ENCODE measurements at regions of chr12 and their contacts with region 1.

Region 1: DNA sequence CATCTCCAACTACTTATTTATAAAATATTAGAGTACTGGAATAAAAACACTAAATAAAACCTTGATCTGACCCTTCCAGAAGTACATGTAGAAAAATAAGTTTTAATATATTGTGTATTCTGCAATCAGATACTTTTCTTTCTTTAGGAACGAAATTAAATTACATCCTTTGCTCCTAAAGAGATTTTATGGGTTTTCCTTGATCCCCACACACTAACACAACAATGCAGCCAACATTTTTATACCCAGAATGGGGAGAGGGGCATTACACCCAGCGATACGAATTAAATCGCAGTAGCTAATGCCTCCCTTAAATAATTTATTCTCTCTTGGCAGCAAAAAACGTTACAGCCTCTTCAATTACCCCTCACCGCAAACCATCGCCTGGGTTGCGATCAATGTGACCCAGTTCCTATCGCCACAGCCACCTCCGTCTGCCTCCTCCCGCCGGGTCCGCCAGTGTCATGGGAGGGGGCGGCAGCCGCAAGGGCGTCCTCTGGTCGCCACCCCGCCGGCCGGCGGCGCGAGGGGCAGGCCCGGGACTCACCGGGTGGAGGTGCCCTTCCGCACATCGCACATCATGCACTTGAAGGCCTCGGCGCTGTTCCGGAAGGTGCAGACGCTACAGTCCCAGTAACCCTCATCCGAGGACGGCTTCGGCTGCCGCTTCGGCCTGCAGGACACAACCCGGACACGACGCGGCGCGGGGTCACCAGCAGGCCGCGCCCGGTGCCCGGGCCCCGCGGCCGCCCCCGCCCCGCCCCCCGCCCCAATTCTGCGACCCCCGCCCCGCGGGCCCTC is 796 bp downstream of the YAF2 start:
- DNase-seq: peak; percentile 75
- ATAC-seq: peak; percentile 76
- H3K4me3 ChIP-seq: peak overlapping the region; percentile 97
- H3K27ac ChIP-seq: peak overlapping the region; percentile 85
- H3K4me1 ChIP-seq: no peaks in the 10 kb centered on the region
- H3K27me3 ChIP-seq: no peaks in the 10 kb centered on the region
- CTCF ChIP-seq: peak; percentile 45; the same call in 1 of the 2 replicates
- POLR2A ChIP-seq: no peak; the same call in 1 of the 2 replicates
- RAD21 ChIP-seq: peak; percentile 25

Region 2: GRCh38 chr12:42144408-42145196 is 92.7 kb before region 1 on chr12 and contains the start of gene GXYLT1:
- CTCF ChIA-PET with region 1: no interaction called
- POLR2A ChIA-PET with region 1: no interaction called
- dilution Hi-C with region 1: no loop called
- in situ Hi-C with region 1: no loop called
- intact Hi-C with region 1: loop called (anchors 5 kb)
- DNase-seq: peak; percentile 91
- ATAC-seq: peak; percentile 97
- H3K4me3 ChIP-seq: peak within 1 kb of the TSS; percentile 94
- H3K27ac ChIP-seq: peak within 1 kb of the TSS; percentile 78
- H3K4me1 ChIP-seq: peaks cover 4% of the 10 kb centered on the region; the same call in 1 of the 2 replicates
- H3K27me3 ChIP-seq: no peaks in the 10 kb centered on the region
- CTCF ChIP-seq: no peak
- POLR2A ChIP-seq: 0 out of 2 replicates have a peak, but pooled peaks have one; percentile 39
- RAD21 ChIP-seq: no peak
- total RNA-seq, gene GXYLT1: 8.6 and 18.1 TPM in 2 replicates

Region 3: DNA sequence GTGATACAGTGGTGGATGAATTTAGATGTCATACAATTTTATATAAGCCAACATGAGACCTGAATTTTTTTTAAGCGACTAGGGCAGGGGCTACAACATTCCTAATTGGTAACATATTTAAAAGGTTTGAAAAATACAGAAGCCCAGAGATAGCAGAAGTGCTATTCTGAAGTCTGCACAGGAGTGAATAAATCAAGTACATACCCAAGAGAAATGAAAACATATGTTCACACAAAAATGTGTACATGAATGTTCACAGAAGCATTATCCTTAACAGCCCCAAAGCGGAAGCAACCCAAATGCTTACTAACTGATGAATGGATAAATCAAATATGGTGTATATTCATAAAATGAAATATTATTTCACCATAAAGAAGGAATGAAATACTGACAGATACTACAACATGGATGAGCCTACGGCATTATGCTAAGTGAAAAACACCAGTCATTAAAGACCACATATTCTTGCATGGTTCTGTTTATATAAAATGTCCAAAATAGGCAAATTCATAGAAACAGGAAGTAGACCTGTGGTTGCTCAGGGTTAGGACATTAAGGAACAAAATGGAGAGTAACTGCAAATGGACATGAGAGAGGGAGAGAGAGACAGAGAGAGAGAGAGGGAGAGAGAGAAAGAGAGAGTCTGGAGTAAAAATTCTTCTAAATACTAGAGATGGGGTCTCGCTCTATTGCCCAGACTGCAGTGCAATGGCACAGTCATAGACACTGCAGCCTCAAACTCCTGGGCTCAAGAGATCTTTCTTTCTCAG is 64.6 kb before region 1 on chr12:
- CTCF ChIA-PET with region 1: no interaction called
- POLR2A ChIA-PET with region 1: no interaction called
- dilution Hi-C with region 1: no loop called
- in situ Hi-C with region 1: no loop called
- intact Hi-C with region 1: no loop called
- DNase-seq: no peak
- ATAC-seq: no peak
- H3K4me3 ChIP-seq: no peak overlapping the region
- H3K27ac ChIP-seq: no peak overlapping the region
- H3K4me1 ChIP-seq: no peaks in the 10 kb centered on the region
- H3K27me3 ChIP-seq: no peaks in the 10 kb centered on the region
- CTCF ChIP-seq: no peak
- POLR2A ChIP-seq: no peak
- RAD21 ChIP-seq: no peak

Region 4: DNA sequence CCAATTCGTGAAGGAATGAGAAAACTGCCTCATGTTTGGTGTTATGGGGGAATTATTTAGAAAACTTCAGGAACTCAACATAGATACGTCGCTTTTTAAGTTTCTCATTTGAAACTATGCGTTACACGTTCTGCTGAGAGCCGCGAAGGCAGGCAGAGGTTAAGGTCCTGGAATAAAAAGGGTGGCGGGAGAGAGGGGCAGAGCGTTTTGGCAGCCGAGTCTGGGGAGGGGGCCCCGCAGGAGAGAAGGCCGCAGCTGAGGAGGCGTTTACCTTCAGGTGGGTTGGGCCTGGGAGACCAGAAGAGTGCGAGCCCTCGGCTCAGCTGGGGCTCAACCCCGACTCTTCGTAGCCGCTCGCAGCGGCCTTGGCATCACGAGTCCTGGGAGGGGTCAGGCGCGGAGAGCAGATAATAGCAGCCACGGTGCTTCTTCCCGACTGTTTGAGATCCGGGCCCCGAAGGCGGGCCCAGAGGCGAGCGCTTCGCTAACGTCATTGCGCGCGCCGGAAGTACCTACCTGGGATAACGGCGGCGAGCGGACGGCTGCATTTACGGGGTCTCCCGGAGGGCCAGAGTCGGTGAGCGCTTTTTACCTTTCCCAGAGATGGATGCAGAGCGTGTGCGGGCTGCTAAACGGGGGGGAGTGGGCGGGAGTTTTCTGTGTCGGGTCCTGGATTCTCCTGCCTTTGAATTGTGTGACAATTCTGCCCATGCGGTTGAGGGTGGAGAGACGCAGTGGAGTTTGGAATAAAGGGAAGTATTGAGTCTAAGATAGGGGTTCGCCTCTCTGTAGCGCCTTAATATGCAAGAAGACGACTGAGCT is 88.6 kb after region 1 on chr12 and contains the starts of genes PPHLN1 and ZCRB1:
- CTCF ChIA-PET with region 1: no interaction called
- POLR2A ChIA-PET with region 1: no interaction called
- dilution Hi-C with region 1: no loop called
- in situ Hi-C with region 1: loop called (anchors 10 kb)
- intact Hi-C with region 1: loop called (anchors 2 kb)
- DNase-seq: peak; percentile 71
- ATAC-seq: peak; percentile 97
- H3K4me3 ChIP-seq: peak within 1 kb of the TSS; percentile 97
- H3K27ac ChIP-seq: peak within 1 kb of the TSS; percentile 85
- H3K4me1 ChIP-seq: peaks cover 2% of the 10 kb centered on the region; the same call in 1 of the 2 replicates
- H3K27me3 ChIP-seq: no peaks in the 10 kb centered on the region
- CTCF ChIP-seq: no peak
- POLR2A ChIP-seq: peak; percentile 85
- RAD21 ChIP-seq: no peak
- total RNA-seq, gene PPHLN1: 50.7 and 96.9 TPM in 2 replicates
- total RNA-seq, gene ZCRB1: 28.1 and 33.1 TPM in 2 replicates

Measured in IMR-90 (cell line).